Caco-2 (cell line): ENCODE measurements at regions of chr3 and their contacts with region 1.

Region 1: GRCh38 chr3:15664144-15664543 is 62.6 kb downstream of the BTD start:
- DNase-seq: no peak
- H3K4me3 ChIP-seq: no peak overlapping the region
- H3K4me3 Mint-ChIP-seq: no peak overlapping the region
- H3K27ac Mint-ChIP-seq: no peak overlapping the region
- H3K4me1 ChIP-seq: no peaks in the 10 kb centered on the region
- H3K4me1 Mint-ChIP-seq: no peaks in the 10 kb centered on the region
- H3K27me3 ChIP-seq: no peaks in the 10 kb centered on the region
- H3K27me3 Mint-ChIP-seq: no peaks in the 10 kb centered on the region
- CTCF ChIP-seq: no peak

Region 2: GRCh38 chr3:15332405-15333098 is 331.6 kb before region 1 on chr3 and contains the start of gene SH3BP5:
- CTCF ChIA-PET with region 1: no interaction called
- POLR2A ChIA-PET with region 1: no interaction called
- intact Hi-C with region 1: no loop called
- DNase-seq: peak; percentile 64 to 83
- H3K4me3 ChIP-seq: peak within 1 kb of the TSS; percentile 93
- H3K4me3 Mint-ChIP-seq: peak within 1 kb of the TSS; percentile 91
- H3K27ac Mint-ChIP-seq: peak within 1 kb of the TSS; percentile 82
- H3K4me1 ChIP-seq: peaks cover 16% of the 10 kb centered on the region
- H3K4me1 Mint-ChIP-seq: peaks cover 3% of the 10 kb centered on the region
- H3K27me3 ChIP-seq: no peaks in the 10 kb centered on the region
- H3K27me3 Mint-ChIP-seq: no peaks in the 10 kb centered on the region
- CTCF ChIP-seq: peak; percentile 49 to 62
- total RNA-seq, gene SH3BP5: 20.8 and 26.1 TPM in 2 replicates

Region 3: DNA sequence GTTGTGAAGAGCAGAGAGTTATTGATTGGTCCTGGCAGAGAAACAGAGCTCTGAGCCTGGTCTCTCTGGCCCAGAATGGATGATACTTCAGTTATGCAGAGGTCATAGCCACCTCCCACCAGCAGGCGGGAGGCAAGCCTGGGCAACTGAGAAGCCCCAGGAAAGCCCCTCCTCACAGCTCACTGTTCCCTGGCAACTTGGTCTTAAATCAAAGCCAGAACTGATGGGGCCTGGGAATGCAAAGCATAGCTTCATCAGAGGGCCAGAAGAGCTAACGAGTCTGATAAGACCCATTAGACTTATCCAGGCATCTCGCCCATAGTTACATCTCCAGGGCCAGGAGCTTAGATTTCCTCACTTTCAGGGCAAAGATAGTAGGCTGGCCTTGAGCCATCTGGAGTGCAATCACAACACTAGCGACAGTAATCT is 137.1 kb before region 1 on chr3:
- CTCF ChIA-PET with region 1: no interaction called
- POLR2A ChIA-PET with region 1: no interaction called
- intact Hi-C with region 1: no loop called
- DNase-seq: peak in 1 of 2 experiments; percentile 21
- H3K4me3 ChIP-seq: no peak overlapping the region
- H3K4me3 Mint-ChIP-seq: no peak overlapping the region
- H3K27ac Mint-ChIP-seq: no peak overlapping the region
- H3K4me1 ChIP-seq: no peaks in the 10 kb centered on the region
- H3K4me1 Mint-ChIP-seq: peaks cover 6% of the 10 kb centered on the region
- H3K27me3 ChIP-seq: no peaks in the 10 kb centered on the region
- H3K27me3 Mint-ChIP-seq: no peaks in the 10 kb centered on the region
- CTCF ChIP-seq: peak; percentile 44 to 56

Region 4: GRCh38 chr3:15629860-15630597 is 34.1 kb before region 1 on chr3:
- CTCF ChIA-PET with region 1: no interaction called
- POLR2A ChIA-PET with region 1: no interaction called
- intact Hi-C with region 1: loop called (anchors 1 kb)
- DNase-seq: peak; percentile 47 to 68
- H3K4me3 ChIP-seq: no peak overlapping the region
- H3K4me3 Mint-ChIP-seq: no peak overlapping the region
- H3K27ac Mint-ChIP-seq: no peak overlapping the region
- H3K4me1 ChIP-seq: no peaks in the 10 kb centered on the region
- H3K4me1 Mint-ChIP-seq: no peaks in the 10 kb centered on the region
- H3K27me3 ChIP-seq: no peaks in the 10 kb centered on the region
- H3K27me3 Mint-ChIP-seq: no peaks in the 10 kb centered on the region
- CTCF ChIP-seq: peak; percentile 50 to 58